Cardiac septum (tissue), 1 donor: ENCODE measurements at regions of chr1 and their contacts with region 1.

Region 1: DNA sequence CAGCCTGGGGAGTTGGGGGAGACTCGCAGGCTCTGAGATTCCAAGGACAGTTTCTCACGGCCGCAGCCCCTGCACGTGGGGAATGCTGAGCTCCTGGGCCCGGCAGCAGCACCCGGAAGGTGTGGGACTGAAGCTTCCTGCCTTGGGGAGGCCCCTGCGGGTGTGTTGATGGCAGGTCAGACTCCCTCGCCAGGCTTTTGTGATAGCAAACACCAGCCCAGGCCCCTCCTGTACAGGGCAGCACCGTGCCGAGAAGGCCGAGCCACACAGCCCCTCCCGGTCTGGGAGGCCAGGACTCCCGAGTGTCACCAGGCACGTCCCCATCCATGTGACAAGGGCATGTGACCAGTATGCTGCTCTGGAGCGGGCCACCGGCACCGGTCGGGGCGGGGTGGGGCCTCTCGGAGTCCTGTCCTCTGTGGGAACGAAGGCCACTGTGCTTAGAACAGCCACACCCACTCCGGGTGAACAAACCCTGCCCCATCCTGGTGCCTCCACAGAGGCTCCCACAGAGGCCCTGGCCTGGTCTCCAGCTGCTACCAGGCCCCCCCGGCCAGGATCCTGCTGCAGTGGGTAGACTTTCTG is 31.1 kb upstream of the ARHGEF16 start:
- DNase-seq: peak; percentile 92

Region 2: GRCh38 chr1:2821966-2822620 is 601.2 kb before region 1 on chr1:
- intact Hi-C with region 1: loop called (anchors 2 kb)
- DNase-seq: no peak

Region 3: DNA sequence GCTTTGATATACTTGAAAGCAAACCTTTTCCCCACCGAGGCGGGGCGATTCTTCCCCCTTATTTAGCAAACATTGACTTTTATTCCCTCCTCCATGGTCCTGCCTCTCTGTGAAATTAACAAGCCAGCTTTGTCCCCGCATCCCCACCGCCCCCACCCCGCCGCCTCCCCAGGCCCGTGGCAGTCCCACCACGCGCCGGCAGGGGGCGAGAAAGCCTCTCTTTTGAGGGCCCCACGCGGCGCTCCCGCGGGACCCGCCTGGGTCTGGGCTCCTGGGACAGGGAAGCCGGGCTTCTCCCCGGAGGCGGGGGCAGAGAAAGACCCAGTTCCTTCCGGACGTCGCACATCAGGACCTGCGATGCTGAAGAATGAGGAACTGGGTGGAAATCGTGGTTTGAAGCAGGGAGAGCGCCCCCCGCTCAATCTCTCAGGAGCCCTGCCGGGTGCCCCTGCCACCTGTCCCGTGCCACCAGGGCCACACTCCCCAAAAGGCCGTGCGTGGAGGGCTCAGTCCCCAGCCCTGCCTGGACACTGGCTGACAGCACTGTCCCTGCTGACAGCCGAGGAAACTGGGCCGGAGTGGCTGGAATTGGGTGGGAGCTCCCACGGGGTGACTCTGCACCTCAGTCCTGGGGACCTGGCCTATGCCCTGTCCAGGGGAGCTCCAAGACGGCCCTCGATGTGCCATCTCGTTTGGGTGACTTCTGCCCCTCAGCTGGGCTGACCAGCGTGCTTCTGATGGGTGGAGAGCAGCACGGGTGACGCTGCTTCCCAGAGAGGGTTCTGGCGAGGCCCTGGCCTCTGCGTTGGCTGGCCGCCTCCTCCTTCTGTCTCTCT is 410.7 kb before region 1 on chr1:
- intact Hi-C with region 1: loop called (anchors 1 kb)
- DNase-seq: peak; percentile 63

Region 4: GRCh38 chr1:3170561-3171453 is 252.5 kb before region 1 on chr1:
- intact Hi-C with region 1: loop called (anchors 5 kb)
- DNase-seq: peak; percentile 83

Region 5: DNA sequence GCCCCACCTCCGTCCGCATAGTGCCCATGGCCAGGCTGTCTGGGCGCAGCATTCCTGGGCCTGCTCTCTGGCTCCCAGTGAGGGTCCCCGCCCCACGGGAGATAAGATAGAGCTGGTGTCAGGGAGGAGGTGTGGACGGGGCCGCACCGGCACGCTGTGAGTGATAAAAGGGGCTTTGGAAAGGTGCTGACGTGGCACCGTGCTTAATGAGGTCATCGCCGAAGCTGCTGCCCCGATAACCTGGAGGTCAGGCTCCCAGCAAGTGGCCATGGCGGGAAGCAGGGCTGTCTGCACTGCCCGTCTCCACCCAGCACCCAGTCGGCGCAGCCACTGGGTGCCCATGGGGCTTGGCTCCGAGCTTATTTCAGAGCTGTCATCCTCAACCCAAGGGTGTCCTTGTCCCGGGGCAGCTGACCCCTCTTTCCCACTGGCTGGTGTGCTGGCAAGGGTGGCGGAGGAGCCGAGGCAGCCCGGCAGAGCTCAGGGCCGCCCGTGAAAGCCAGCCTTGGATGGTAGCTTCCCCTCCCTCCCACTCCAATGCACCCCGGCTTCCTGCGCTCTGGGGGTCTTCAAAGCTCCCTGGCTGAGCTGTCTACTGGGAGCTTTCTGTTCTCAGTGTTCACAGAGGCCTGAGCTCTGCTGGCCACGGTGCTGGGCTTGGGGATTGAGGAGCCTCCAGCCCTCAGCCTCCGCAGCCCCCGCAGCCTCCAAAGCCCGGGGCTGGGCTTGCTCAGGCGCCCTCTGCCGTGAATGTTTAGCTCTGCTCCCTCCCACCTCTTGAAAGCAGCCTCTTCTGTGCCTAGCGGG is 74.0 kb before region 1 on chr1:
- intact Hi-C with region 1: loop called (anchors 2 kb)
- DNase-seq: peak; percentile 91